H1 (cell line): ENCODE measurements at regions of chr2 and their contacts with region 1.

Region 1: DNA sequence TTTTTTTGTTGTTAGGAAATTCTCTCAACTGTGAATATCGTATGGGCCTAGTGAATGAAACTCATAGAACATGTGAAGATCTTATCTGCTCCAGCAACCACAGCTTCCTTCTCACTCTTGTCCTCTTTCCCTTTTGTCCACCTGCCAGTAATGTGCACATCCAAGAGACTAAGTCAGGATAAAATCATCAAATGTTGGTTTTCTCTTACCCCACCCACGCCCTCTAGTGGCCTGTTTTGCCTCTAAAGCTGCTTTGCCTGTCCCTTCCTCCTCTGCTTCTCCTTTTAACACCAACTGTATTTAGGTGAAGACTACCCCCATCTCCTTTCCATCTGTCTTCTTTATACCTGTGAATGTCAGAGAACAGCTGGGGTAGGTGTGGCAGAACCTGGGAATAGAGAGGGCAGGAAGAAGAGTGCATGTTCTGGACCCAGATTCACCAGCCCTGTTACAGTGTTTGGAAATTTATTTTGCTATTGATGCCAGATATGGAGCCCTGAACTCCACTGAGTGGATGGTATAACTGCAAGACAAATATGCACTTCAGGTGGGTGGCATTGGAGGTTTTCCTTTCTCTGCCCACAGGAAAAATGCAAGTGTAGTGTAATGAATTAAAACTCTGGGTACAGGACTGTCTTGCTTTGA is 8.4 kb upstream of the MGAT5 start:
- DNase-seq: peak in 1 of 2 experiments; percentile 87
- H3K4me3 ChIP-seq: no peak overlapping the region
- H3K27ac ChIP-seq: no peak overlapping the region
- H3K4me1 ChIP-seq: peaks cover 0 to 6% (median 0%) of the 10 kb centered on the region in 4 experiments; a peak in 1 of 7 replicates
- H3K27me3 ChIP-seq: no peaks in the 10 kb centered on the region
- CTCF ChIP-seq: peak; percentile 49 to 90 (median 59)
- EP300 ChIP-seq: no peak
- POLR2A ChIP-seq: no peak
- RAD21 ChIP-seq: peak; percentile 66 to 72

Region 2: DNA sequence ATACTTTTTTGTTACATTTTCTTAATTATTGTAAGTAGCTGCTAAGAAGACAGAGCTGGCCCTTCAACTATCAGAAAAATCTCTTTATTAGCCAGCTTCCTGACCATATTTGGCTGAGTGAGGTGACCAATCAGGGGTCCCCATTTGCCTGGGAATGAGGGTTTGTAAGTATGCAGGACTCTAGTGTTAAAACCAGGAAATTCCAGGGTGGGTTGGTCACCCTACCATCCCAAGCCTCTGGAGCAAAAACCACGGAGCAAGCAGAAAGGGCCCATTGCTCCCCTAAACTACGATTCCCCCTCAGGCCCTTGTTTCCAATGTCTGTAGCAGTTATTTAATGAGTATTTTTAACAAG is 511.6 kb before region 1 on chr2:
- CTCF ChIA-PET with region 1: no interaction called
- POLR2A ChIA-PET with region 1: no interaction called
- DNase-seq: no peak
- H3K4me3 ChIP-seq: no peak overlapping the region
- H3K27ac ChIP-seq: no peak overlapping the region
- H3K4me1 ChIP-seq: no peaks in the 10 kb centered on the region
- H3K27me3 ChIP-seq: no peaks in the 10 kb centered on the region
- CTCF ChIP-seq: no peak
- EP300 ChIP-seq: no peak
- POLR2A ChIP-seq: no peak
- RAD21 ChIP-seq: no peak

Region 3: GRCh38 chr2:134232868-134233727 is 12.4 kb before region 1 on chr2:
- CTCF ChIA-PET with region 1: interaction called, 43 read pairs
- POLR2A ChIA-PET with region 1: interaction called, 4 read pairs
- DNase-seq: no peak
- H3K4me3 ChIP-seq: no peak overlapping the region
- H3K27ac ChIP-seq: no peak overlapping the region
- H3K4me1 ChIP-seq: no peaks in the 10 kb centered on the region
- H3K27me3 ChIP-seq: no peaks in the 10 kb centered on the region; a peak in 2 of 7 replicates
- CTCF ChIP-seq: no peak
- EP300 ChIP-seq: no peak
- POLR2A ChIP-seq: no peak
- RAD21 ChIP-seq: no peak

Region 4: GRCh38 chr2:134261398-134262131 is 16.1 kb after region 1 on chr2:
- CTCF ChIA-PET with region 1: interaction called, 29 read pairs
- POLR2A ChIA-PET with region 1: no interaction called
- DNase-seq: peak in 1 of 2 experiments; percentile 7
- H3K4me3 ChIP-seq: no peak overlapping the region
- H3K27ac ChIP-seq: no peak overlapping the region
- H3K4me1 ChIP-seq: peaks cover 3 to 11% (median 8%) of the 10 kb centered on the region in 4 experiments; a peak in 6 of 7 replicates
- H3K27me3 ChIP-seq: no peaks in the 10 kb centered on the region
- CTCF ChIP-seq: no peak
- EP300 ChIP-seq: no peak
- POLR2A ChIP-seq: no peak
- RAD21 ChIP-seq: no peak

Region 5: GRCh38 chr2:134282629-134283400 is 37.4 kb after region 1 on chr2:
- CTCF ChIA-PET with region 1: interaction called, 11 read pairs
- POLR2A ChIA-PET with region 1: no interaction called
- DNase-seq: no peak
- H3K4me3 ChIP-seq: no peak overlapping the region
- H3K27ac ChIP-seq: no peak overlapping the region
- H3K4me1 ChIP-seq: no peaks in the 10 kb centered on the region
- H3K27me3 ChIP-seq: no peaks in the 10 kb centered on the region; a peak in 1 of 7 replicates
- CTCF ChIP-seq: no peak
- EP300 ChIP-seq: no peak
- POLR2A ChIP-seq: no peak
- RAD21 ChIP-seq: no peak